ENCODE measurements at regions of chr6 and their contacts with region 1.

Region 1: GRCh38 chr6:134422426-134423231 is 104.7 kb upstream of the SGK1 start:
- DNase-seq: peak; percentile 88
- H3K4me3 Mint-ChIP-seq: peak overlapping the region; percentile 23
- H3K27ac Mint-ChIP-seq: peak overlapping the region; percentile 92
- H3K4me1 Mint-ChIP-seq: peaks cover 46% of the 10 kb centered on the region
- H3K27me3 Mint-ChIP-seq: no peaks in the 10 kb centered on the region
- CTCF ChIP-seq: no peak

Region 2: GRCh38 chr6:134166511-134167261 is 255.9 kb before region 1 on chr6:
- CTCF ChIA-PET with region 1: no interaction called
- POLR2A ChIA-PET with region 1: no interaction called
- intact Hi-C with region 1: no loop called
- DNase-seq: no peak
- H3K4me3 Mint-ChIP-seq: no peak overlapping the region
- H3K27ac Mint-ChIP-seq: no peak overlapping the region
- H3K4me1 Mint-ChIP-seq: peaks cover 19% of the 10 kb centered on the region
- H3K27me3 Mint-ChIP-seq: no peaks in the 10 kb centered on the region
- CTCF ChIP-seq: no peak

Region 3: DNA sequence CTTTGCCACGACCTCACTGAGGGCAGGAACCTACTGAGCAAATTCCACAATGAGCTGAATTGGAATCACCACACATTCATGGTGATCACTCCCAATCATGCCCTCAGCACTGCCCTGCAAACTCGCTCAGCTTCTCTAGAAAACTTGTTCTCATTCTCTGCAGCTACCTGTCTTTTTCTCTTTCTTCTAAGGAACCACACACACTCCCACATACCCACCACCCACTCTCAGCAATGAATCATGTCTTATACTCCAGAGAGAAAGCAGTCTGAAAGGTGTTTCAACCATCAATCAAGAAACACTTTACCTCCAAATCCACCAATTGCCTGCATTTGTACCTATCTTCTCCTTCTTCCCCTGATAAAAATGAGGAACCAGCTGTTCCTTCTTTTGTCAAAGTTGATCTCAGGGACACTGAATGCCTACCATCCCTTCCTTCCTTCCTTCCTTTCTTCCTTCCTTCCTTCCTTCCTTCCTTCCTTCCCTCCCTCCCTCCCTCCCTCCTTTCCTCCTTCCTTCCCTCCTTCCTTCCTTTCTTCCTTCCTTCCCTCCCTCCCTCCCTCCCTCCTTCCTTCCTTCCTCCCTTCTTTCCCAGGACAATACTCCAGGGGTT is 20.2 kb before region 1 on chr6:
- CTCF ChIA-PET with region 1: no interaction called
- POLR2A ChIA-PET with region 1: no interaction called
- intact Hi-C with region 1: no loop called
- DNase-seq: no peak
- H3K4me3 Mint-ChIP-seq: no peak overlapping the region
- H3K27ac Mint-ChIP-seq: no peak overlapping the region
- H3K4me1 Mint-ChIP-seq: no peaks in the 10 kb centered on the region
- H3K27me3 Mint-ChIP-seq: no peaks in the 10 kb centered on the region
- CTCF ChIP-seq: no peak

Region 4: GRCh38 chr6:134436281-134436815 is 13.7 kb after region 1 on chr6:
- CTCF ChIA-PET with region 1: no interaction called
- POLR2A ChIA-PET with region 1: interaction called, 32 read pairs
- intact Hi-C with region 1: loop called (anchors 2 kb)
- DNase-seq: peak; percentile 94
- H3K4me3 Mint-ChIP-seq: peak overlapping the region; percentile 43
- H3K27ac Mint-ChIP-seq: peak overlapping the region; percentile 88
- H3K4me1 Mint-ChIP-seq: peaks cover 24% of the 10 kb centered on the region
- H3K27me3 Mint-ChIP-seq: no peaks in the 10 kb centered on the region
- CTCF ChIP-seq: no peak

Region 5: GRCh38 chr6:134480593-134480992 is 58.0 kb after region 1 on chr6:
- CTCF ChIA-PET with region 1: no interaction called
- POLR2A ChIA-PET with region 1: no interaction called
- intact Hi-C with region 1: no loop called
- DNase-seq: peak; percentile 67
- H3K4me3 Mint-ChIP-seq: no peak overlapping the region
- H3K27ac Mint-ChIP-seq: no peak overlapping the region
- H3K4me1 Mint-ChIP-seq: peaks cover 16% of the 10 kb centered on the region
- H3K27me3 Mint-ChIP-seq: no peaks in the 10 kb centered on the region
- CTCF ChIP-seq: no peak